ENCODE measurements at regions of chr11 and their contacts with region 1.

Region 1: GRCh38 chr11:118171269-118172062 is 5.0 kb downstream of the SCN2B start:
- DNase-seq: peak; percentile 67
- H3K4me3 Mint-ChIP-seq: no peak overlapping the region
- H3K27ac Mint-ChIP-seq: no peak overlapping the region
- H3K4me1 Mint-ChIP-seq: peaks cover 8% of the 10 kb centered on the region
- H3K27me3 Mint-ChIP-seq: peaks cover 31% of the 10 kb centered on the region
- CTCF ChIP-seq: peak; percentile 93

Region 2: GRCh38 chr11:117807482-117808327 is 363.8 kb before region 1 on chr11:
- CTCF ChIA-PET with region 1: interaction called, 5 read pairs
- POLR2A ChIA-PET with region 1: no interaction called
- intact Hi-C with region 1: loop called (anchors 10 kb)
- DNase-seq: peak; percentile 59
- H3K4me3 Mint-ChIP-seq: no peak overlapping the region
- H3K27ac Mint-ChIP-seq: no peak overlapping the region
- H3K4me1 Mint-ChIP-seq: no peaks in the 10 kb centered on the region
- H3K27me3 Mint-ChIP-seq: peaks cover 32% of the 10 kb centered on the region
- CTCF ChIP-seq: peak; percentile 87

Region 3: GRCh38 chr11:118132385-118133151 is 38.9 kb before region 1 on chr11:
- CTCF ChIA-PET with region 1: interaction called, 13 read pairs
- POLR2A ChIA-PET with region 1: interaction called, 3 read pairs
- intact Hi-C with region 1: no loop called
- DNase-seq: peak; percentile 57
- H3K4me3 Mint-ChIP-seq: no peak overlapping the region
- H3K27ac Mint-ChIP-seq: no peak overlapping the region
- H3K4me1 Mint-ChIP-seq: no peaks in the 10 kb centered on the region
- H3K27me3 Mint-ChIP-seq: peaks cover 22% of the 10 kb centered on the region
- CTCF ChIP-seq: no peak

Region 4: GRCh38 chr11:118139578-118139977 is 31.9 kb before region 1 on chr11:
- CTCF ChIA-PET with region 1: interaction called, 66 read pairs
- POLR2A ChIA-PET with region 1: interaction called, 3 read pairs
- intact Hi-C with region 1: no loop called
- DNase-seq: no peak
- H3K4me3 Mint-ChIP-seq: no peak overlapping the region
- H3K27ac Mint-ChIP-seq: no peak overlapping the region
- H3K4me1 Mint-ChIP-seq: peaks cover 15% of the 10 kb centered on the region
- H3K27me3 Mint-ChIP-seq: peaks cover 54% of the 10 kb centered on the region
- CTCF ChIP-seq: no peak

Region 5: DNA sequence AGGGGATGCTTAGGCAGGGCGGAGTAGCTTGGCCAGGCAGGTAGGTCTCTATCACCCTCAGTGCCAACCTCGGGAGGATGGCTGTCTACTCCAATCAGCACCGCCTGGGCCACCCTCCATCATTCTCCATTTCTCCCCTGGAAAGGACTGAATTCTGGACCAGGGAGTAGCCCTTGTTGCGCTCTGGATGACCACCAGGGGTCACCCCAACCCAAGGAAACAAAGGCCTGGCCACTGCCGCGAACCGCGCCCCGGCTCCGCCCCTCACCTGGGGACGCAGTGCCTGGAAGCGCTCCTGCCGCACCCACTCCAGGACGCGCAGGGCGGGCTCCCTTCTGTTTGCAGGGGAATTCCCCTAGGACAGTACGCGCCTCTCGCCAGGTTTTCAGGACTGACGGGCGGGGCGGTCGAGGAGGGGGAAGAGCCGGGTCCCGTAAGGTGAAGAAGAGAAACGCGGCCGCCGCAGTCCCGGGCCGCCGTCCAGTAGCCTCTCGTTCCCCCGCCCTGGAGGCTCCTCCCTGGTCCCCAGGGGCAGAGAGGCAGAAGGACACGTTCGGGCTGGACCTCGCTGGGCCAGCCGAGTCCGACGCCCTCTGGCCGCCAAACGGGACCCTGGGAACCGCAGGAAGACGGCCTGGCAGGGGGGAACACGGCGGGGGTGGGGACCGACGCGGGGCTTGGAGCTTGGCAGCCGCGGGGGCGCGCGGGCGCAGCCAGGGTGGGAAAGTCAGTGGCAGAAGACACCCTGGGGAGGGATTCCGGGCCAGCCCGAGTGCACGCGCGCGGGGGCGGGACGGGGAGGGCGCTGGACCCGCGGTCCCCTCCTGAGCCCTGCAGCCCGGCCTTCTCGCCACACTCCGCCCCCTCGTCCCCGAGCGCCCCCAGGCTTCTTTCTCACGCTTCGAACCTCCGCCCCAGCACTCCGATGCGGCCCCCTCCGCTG is 25.9 kb before region 1 on chr11:
- CTCF ChIA-PET with region 1: interaction called, 66 read pairs
- POLR2A ChIA-PET with region 1: interaction called, 7 read pairs
- intact Hi-C with region 1: loop called (anchors 1 kb)
- DNase-seq: peak; percentile 88
- H3K4me3 Mint-ChIP-seq: peak overlapping the region; percentile 74
- H3K27ac Mint-ChIP-seq: peak overlapping the region; percentile 66
- H3K4me1 Mint-ChIP-seq: peaks cover 15% of the 10 kb centered on the region
- H3K27me3 Mint-ChIP-seq: peaks cover 15% of the 10 kb centered on the region
- CTCF ChIP-seq: peak; percentile 92

Region 6: GRCh38 chr11:118152552-118153471 is 18.7 kb before region 1 on chr11 and contains the start of gene SCN4B:
- CTCF ChIA-PET with region 1: interaction called, 89 read pairs
- POLR2A ChIA-PET with region 1: interaction called, 4 read pairs
- intact Hi-C with region 1: no loop called
- DNase-seq: peak; percentile 50
- H3K4me3 Mint-ChIP-seq: peak within 1 kb of the TSS; percentile 47
- H3K27ac Mint-ChIP-seq: no peak within 1 kb of the TSS
- H3K4me1 Mint-ChIP-seq: peaks cover 8% of the 10 kb centered on the region
- H3K27me3 Mint-ChIP-seq: peaks cover 43% of the 10 kb centered on the region
- CTCF ChIP-seq: no peak
- total RNA-seq, gene SCN4B: 0.32 TPM in 1 of 2 replicates, not detected in the other

Region 7: DNA sequence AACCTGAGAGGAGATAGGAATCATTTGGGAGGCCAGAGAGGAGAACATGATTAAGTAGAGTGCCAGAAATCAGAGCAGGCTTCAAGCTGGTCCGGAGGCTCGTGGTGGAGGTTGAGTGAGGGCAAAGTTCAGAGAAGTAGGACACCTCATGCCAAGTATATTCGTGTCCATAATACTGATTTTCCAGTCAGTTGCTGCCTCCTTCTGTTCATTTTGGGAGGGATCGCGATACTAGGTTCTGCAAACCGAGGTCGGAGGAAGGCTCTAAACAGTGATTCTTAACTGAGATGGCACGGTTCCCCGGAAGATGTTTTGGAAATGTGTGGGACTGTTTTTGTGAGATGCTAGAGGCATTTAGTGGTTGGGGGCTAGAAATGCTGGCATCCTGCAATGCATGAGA is 119.5 kb after region 1 on chr11:
- CTCF ChIA-PET with region 1: interaction called, 10 read pairs
- POLR2A ChIA-PET with region 1: interaction called, 5 read pairs
- intact Hi-C with region 1: no loop called
- DNase-seq: peak; percentile 75
- H3K4me3 Mint-ChIP-seq: peak overlapping the region; percentile 19
- H3K27ac Mint-ChIP-seq: no peak overlapping the region
- H3K4me1 Mint-ChIP-seq: peaks cover 19% of the 10 kb centered on the region
- H3K27me3 Mint-ChIP-seq: no peaks in the 10 kb centered on the region
- CTCF ChIP-seq: peak; percentile 43

Region 8: GRCh38 chr11:118497831-118498230 is 326.4 kb after region 1 on chr11:
- CTCF ChIA-PET with region 1: no interaction called
- POLR2A ChIA-PET with region 1: no interaction called
- intact Hi-C with region 1: no loop called
- DNase-seq: no peak
- H3K4me3 Mint-ChIP-seq: no peak overlapping the region
- H3K27ac Mint-ChIP-seq: no peak overlapping the region
- H3K4me1 Mint-ChIP-seq: no peaks in the 10 kb centered on the region
- H3K27me3 Mint-ChIP-seq: no peaks in the 10 kb centered on the region
- CTCF ChIP-seq: no peak